ENCODE measurements at regions of chr1 and their contacts with region 1.

Region 1: GRCh38 chr1:156356875-156357534 is 12.0 kb upstream of the RHBG start:
- DNase-seq: peak; percentile 84 to 92
- H3K4me3 ChIP-seq: peak overlapping the region; percentile 27 to 58 (median 42); a peak in 6 of 8 replicates
- H3K27ac ChIP-seq: no peak overlapping the region
- H3K4me1 ChIP-seq: peaks cover 0 to 4% (median 2%) of the 10 kb centered on the region in 4 experiments; a peak in 3 of 7 replicates
- H3K27me3 ChIP-seq: no peaks in the 10 kb centered on the region; a peak in 1 of 7 replicates
- CTCF ChIP-seq: peak; percentile 95 to 99 (median 95)
- EP300 ChIP-seq: peak in 1 of 2 experiments; percentile 40; a peak in 1 of 3 replicates
- POLR2A ChIP-seq: peak in 1 of 2 experiments; percentile 41; a peak in 1 of 3 replicates
- RAD21 ChIP-seq: peak; percentile 55 to 69

Region 2: DNA sequence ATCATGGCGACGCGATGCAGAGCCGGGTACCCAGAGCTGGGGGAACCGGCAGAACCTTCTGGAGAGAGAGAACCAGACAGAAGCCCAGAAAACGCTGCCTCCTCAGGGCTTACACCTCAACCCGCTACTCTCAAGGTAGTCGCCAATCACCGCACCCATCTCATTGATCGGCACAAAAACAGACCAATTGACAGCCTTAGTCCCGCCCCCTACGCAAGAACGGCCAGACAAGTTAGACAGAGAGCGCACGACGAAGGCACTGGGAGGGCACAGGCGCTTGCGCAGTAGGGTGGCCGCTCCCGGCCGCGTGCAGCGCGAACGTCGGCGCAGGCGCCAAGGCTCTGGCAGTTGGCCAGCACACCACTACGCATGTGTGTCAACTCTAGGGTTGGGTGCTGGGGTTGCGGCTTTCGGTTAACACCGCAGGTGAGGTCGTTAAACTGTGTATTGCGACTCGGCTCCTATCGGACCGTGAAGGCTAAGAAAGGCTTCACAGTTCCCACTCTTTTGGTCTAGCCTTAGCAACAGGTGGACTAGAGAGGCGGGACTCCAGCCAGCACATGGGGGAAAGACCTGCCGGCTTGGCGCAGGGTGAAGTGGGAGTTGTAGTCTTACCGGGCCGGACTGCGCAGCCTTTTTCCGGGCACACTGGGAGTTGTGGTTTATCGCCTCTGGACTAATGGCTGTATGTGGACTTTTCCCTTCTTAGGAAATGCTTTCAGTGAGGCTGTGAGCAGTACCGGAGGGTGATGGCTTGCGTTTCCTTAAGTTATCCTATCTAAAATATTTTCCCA is 18.6 kb before region 1 on chr1 and contains the starts of genes CCT3 and TSACC:
- CTCF ChIA-PET with region 1: interaction called, 60 read pairs
- POLR2A ChIA-PET with region 1: interaction called, 3 read pairs
- DNase-seq: peak; percentile 99 to 100
- H3K4me3 ChIP-seq: peak within 1 kb of the TSS; percentile 83 to 100 (median 94)
- H3K27ac ChIP-seq: peak within 1 kb of the TSS; percentile 81
- H3K4me1 ChIP-seq: 0 out of 7 replicates have a peak, but pooled peaks cover 0 to 2% (median 0%) of the 10 kb centered on the region in 4 experiments
- H3K27me3 ChIP-seq: no peaks in the 10 kb centered on the region
- CTCF ChIP-seq: no peak
- EP300 ChIP-seq: no peak
- POLR2A ChIP-seq: peak; percentile 54 to 91
- RAD21 ChIP-seq: no peak
- total RNA-seq, gene CCT3: 471 and 480 TPM in 2 replicates
- total RNA-seq, gene TSACC: 1.0 and 2.1 TPM in 2 replicates

Region 3: GRCh38 chr1:156346636-156347035 is 10.4 kb before region 1 on chr1:
- CTCF ChIA-PET with region 1: interaction called, 60 read pairs
- POLR2A ChIA-PET with region 1: interaction called, 7 read pairs
- DNase-seq: no peak
- H3K4me3 ChIP-seq: no peak overlapping the region
- H3K27ac ChIP-seq: no peak overlapping the region
- H3K4me1 ChIP-seq: no peaks in the 10 kb centered on the region
- H3K27me3 ChIP-seq: no peaks in the 10 kb centered on the region
- CTCF ChIP-seq: no peak
- EP300 ChIP-seq: no peak
- POLR2A ChIP-seq: no peak
- RAD21 ChIP-seq: no peak

Region 4: GRCh38 chr1:156368889-156369684 is 12.1 kb after region 1 on chr1 and contains the start of gene RHBG:
- CTCF ChIA-PET with region 1: interaction called, 53 read pairs
- POLR2A ChIA-PET with region 1: interaction called, 4 read pairs
- DNase-seq: peak in 1 of 2 experiments; percentile 88
- H3K4me3 ChIP-seq: peak within 1 kb of the TSS; percentile 52 to 66 (median 56)
- H3K27ac ChIP-seq: no peak within 1 kb of the TSS
- H3K4me1 ChIP-seq: peaks cover 0 to 7% (median 4%) of the 10 kb centered on the region in 4 experiments; a peak in 5 of 7 replicates
- H3K27me3 ChIP-seq: peaks cover 0 to 14% (median 11%) of the 10 kb centered on the region in 4 experiments; a peak in 6 of 7 replicates
- CTCF ChIP-seq: no peak
- EP300 ChIP-seq: no peak
- POLR2A ChIP-seq: peak in 1 of 2 experiments; percentile 44; a peak in 1 of 3 replicates
- RAD21 ChIP-seq: no peak
- total RNA-seq, gene RHBG: 2.2 and 2.6 TPM in 2 replicates

Region 5: GRCh38 chr1:156551866-156552265 is 194.9 kb after region 1 on chr1:
- CTCF ChIA-PET with region 1: no interaction called
- POLR2A ChIA-PET with region 1: no interaction called
- DNase-seq: no peak
- H3K4me3 ChIP-seq: no peak overlapping the region
- H3K27ac ChIP-seq: no peak overlapping the region
- H3K4me1 ChIP-seq: no peaks in the 10 kb centered on the region
- H3K27me3 ChIP-seq: no peaks in the 10 kb centered on the region
- CTCF ChIP-seq: no peak
- EP300 ChIP-seq: no peak
- POLR2A ChIP-seq: no peak
- RAD21 ChIP-seq: no peak

Region 6: GRCh38 chr1:156601122-156601830 is 244.3 kb after region 1 on chr1 and contains the start of gene GPATCH4:
- CTCF ChIA-PET with region 1: no interaction called
- POLR2A ChIA-PET with region 1: no interaction called
- DNase-seq: peak in 1 of 2 experiments; percentile 86
- H3K4me3 ChIP-seq: peak within 1 kb of the TSS; percentile 86 to 97 (median 91)
- H3K27ac ChIP-seq: peak within 1 kb of the TSS; percentile 73
- H3K4me1 ChIP-seq: peaks cover 0 to 8% (median 3%) of the 10 kb centered on the region in 4 experiments; a peak in 5 of 7 replicates
- H3K27me3 ChIP-seq: no peaks in the 10 kb centered on the region
- CTCF ChIP-seq: no peak
- EP300 ChIP-seq: no peak
- POLR2A ChIP-seq: peak; percentile 66 to 80; a peak in 2 of 3 replicates
- RAD21 ChIP-seq: no peak
- total RNA-seq, gene GPATCH4: 47.9 and 48.5 TPM in 2 replicates